ENCODE measurements at regions of chr2 and their contacts with region 1.

Region 1: DNA sequence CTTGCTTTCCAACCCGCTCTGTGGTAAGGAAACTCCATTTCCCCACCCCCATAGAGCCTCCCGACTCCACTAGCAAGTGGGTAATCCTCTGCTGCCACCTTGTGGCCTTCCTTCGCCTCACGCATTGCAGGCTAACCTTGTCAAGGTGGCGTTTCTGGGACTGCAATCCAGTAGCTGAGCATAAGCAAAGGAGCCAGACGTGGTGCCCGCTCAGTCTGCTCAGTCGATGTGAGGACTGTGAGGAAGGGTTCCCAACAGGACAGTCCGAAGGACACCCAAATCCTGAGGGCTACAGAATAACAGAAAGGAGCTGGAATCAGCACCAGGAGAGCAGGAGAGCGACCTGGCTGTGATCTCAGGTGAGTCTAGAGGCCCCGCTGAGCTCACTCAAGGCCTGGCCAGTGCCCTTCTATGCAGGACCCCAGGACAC is 144.2 kb downstream of the SUCLG1 start:
- DNase-seq: peak; percentile 82
- ATAC-seq: peak; percentile 91
- H3K4me3 Mint-ChIP-seq: no peak overlapping the region
- H3K27ac Mint-ChIP-seq: no peak overlapping the region
- H3K4me1 Mint-ChIP-seq: no peaks in the 10 kb centered on the region
- H3K27me3 Mint-ChIP-seq: peaks cover 3% of the 10 kb centered on the region

Region 2: GRCh38 chr2:84022810-84023431 is 292.0 kb before region 1 on chr2:
- CTCF ChIA-PET with region 1: interaction called, 20 read pairs
- POLR2A ChIA-PET with region 1: no interaction called
- DNase-seq: peak; percentile 28
- ATAC-seq: no peak
- H3K4me3 Mint-ChIP-seq: no peak overlapping the region
- H3K27ac Mint-ChIP-seq: no peak overlapping the region
- H3K4me1 Mint-ChIP-seq: no peaks in the 10 kb centered on the region
- H3K27me3 Mint-ChIP-seq: no peaks in the 10 kb centered on the region

Region 3: DNA sequence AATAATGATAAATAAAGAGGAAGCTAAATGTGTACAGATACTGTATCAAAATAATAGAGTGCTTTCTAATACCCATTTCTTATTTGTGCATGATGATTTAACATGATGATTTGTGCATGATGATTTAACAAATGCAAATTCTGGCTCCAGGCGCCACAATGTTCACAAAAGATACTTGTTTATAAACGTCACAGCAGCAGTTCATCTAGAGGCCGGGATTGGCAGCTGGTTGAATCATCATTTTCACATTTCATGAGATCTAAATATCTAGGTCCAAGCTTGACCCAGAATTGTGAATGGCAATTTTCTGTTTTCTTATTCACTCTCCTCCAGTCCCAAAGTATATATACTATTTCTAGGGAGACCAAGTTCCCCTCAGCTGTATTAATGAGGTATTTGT is 177.9 kb before region 1 on chr2:
- CTCF ChIA-PET with region 1: no interaction called
- POLR2A ChIA-PET with region 1: no interaction called
- DNase-seq: no peak
- ATAC-seq: no peak
- H3K4me3 Mint-ChIP-seq: no peak overlapping the region
- H3K27ac Mint-ChIP-seq: no peak overlapping the region
- H3K4me1 Mint-ChIP-seq: no peaks in the 10 kb centered on the region
- H3K27me3 Mint-ChIP-seq: no peaks in the 10 kb centered on the region

Region 4: DNA sequence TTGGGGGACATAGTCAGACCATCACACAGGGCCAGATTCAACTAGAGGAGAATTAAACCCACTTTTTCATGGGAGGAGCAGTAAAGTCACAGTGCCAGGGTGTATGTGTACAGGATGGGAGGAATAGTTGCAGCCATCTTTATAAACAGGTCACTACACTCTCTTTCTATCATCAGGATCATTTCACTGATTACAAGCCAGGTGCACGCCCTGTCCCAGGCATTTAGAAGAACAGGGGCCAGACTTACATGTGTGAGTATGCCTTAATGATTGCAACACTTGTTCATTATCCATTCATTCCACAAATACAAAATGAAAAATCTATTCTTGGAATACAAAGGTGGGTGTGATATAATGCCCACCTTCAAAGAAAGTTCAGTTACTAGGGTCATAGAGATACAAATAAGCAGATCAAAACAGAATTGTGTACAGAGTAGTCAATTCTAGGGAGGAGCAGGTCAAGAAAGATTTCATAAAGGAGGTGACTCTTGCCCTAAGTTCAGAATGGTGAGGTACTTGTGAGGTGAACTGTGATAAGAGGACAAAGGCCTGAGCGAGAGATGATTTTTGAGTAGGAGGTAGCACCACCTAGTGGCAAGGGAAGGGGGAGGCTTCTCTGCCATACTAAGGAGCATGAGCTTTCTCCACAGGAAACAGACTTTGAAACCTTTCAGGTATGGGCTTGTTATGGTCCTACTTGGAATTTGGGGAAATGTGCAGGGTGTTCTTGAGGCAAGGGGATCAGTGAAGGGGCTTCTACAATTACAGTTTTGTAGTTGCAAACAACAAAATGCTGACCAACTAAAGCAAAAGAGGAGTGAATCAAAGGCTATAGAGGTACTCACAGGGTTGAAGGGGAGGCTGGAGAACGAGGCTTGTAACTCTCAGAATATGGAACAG is 12.2 kb before region 1 on chr2:
- CTCF ChIA-PET with region 1: interaction called, 42 read pairs
- POLR2A ChIA-PET with region 1: no interaction called
- DNase-seq: peak; percentile 64
- ATAC-seq: peak; percentile 80
- H3K4me3 Mint-ChIP-seq: no peak overlapping the region
- H3K27ac Mint-ChIP-seq: no peak overlapping the region
- H3K4me1 Mint-ChIP-seq: no peaks in the 10 kb centered on the region
- H3K27me3 Mint-ChIP-seq: peaks cover 6% of the 10 kb centered on the region